HEK293 (cell line): ENCODE measurements at regions of chr7 and their contacts with region 1.

Region 1: GRCh38 chr7:118389629-118390028 is 165.1 kb downstream of the ANKRD7 start:
- H3K4me3 ChIP-seq: no peak overlapping the region
- H3K27ac ChIP-seq: no peak overlapping the region
- H3K4me1 ChIP-seq: no peaks in the 10 kb centered on the region
- CTCF ChIP-seq: no peak

Region 2: GRCh38 chr7:118175740-118176139 is 213.9 kb before region 1 on chr7:
- CTCF ChIA-PET with region 1: interaction called, 11 read pairs
- POLR2A ChIA-PET with region 1: no interaction called
- H3K4me3 ChIP-seq: no peak overlapping the region
- H3K27ac ChIP-seq: no peak overlapping the region
- H3K4me1 ChIP-seq: no peaks in the 10 kb centered on the region
- CTCF ChIP-seq: no peak

Region 3: DNA sequence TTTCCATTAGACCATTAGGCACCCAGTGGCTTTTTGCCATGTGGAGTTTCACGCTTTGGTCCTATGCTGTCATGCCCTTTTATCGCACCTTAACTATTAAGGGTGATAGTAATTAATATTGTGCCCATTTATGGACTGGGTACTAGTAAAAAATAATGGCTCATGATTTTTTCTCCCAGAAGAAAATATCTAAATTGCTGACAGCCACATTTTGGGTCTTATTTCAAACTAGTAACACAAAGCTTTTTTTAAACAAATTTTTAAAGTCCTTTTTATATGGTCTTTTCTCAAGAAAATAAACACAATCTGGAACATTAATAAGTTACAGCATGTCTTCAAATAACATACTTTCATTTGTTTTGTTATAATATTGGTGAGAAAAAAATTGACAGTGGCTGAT is 14.6 kb after region 1 on chr7:
- CTCF ChIA-PET with region 1: no interaction called
- POLR2A ChIA-PET with region 1: no interaction called
- H3K4me3 ChIP-seq: no peak overlapping the region
- H3K27ac ChIP-seq: no peak overlapping the region
- H3K4me1 ChIP-seq: no peaks in the 10 kb centered on the region
- CTCF ChIP-seq: no peak